ENCODE measurements at regions of chr12 and their contacts with region 1.

Region 1: DNA sequence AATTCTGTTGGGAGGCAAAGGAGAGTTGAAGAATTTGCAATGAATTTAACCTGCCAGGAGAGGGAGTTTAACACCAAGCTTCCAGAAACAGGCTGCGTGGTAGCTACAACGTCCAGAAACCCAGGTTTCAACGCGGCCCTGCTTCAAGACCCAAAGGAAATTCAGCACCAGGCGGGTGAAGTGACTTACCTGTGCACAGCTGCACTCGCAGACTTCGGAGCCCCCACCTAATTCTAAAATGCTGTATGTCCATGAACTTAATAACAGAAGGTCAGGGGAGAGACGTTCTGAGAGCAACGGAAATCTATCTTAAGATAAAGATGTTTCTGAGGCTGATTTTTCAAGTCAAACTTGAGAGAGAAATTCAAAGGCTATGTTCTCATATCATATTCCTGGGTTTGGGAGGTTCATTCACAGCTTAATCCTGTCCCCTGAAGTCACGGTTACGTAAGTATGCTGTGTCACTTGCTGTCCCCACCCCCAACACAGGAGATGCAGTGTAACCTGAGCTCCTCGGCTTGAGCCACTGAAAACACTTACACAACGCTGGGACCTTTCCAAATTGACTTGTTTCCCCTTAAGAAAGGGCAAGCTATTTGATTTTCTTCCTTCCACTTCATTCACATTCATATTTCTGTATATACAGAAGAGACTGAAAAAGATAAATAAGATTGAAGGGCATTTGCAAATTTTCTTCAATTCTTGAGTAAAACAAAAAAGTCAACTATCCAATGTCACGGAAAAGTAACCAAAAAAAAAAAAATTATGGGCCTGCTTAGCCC is 22.7 kb downstream of the CLIP1 start:
- DNase-seq: peak; percentile 78 to 88 (median 86)
- H3K4me3 ChIP-seq: peak overlapping the region in 6 of 7 experiments; percentile 14 to 60 (median 44)
- H3K27ac ChIP-seq: peak overlapping the region; percentile 47 to 86
- H3K4me1 ChIP-seq: peaks cover 7 to 32% (median 25%) of the 10 kb centered on the region in 4 experiments
- H3K27me3 ChIP-seq: no peaks in the 10 kb centered on the region

Region 2: GRCh38 chr12:122413516-122414404 is 14.0 kb after region 1 on chr12:
- CTCF ChIA-PET with region 1: interaction called, 33 read pairs
- POLR2A ChIA-PET with region 1: no interaction called
- DNase-seq: peak in 2 of 3 donors; percentile 15 to 18
- H3K4me3 ChIP-seq: no peak overlapping the region
- H3K27ac ChIP-seq: no peak overlapping the region
- H3K4me1 ChIP-seq: peaks cover 0 to 12% (median 8%) of the 10 kb centered on the region in 4 experiments
- H3K27me3 ChIP-seq: no peaks in the 10 kb centered on the region

Region 3: DNA sequence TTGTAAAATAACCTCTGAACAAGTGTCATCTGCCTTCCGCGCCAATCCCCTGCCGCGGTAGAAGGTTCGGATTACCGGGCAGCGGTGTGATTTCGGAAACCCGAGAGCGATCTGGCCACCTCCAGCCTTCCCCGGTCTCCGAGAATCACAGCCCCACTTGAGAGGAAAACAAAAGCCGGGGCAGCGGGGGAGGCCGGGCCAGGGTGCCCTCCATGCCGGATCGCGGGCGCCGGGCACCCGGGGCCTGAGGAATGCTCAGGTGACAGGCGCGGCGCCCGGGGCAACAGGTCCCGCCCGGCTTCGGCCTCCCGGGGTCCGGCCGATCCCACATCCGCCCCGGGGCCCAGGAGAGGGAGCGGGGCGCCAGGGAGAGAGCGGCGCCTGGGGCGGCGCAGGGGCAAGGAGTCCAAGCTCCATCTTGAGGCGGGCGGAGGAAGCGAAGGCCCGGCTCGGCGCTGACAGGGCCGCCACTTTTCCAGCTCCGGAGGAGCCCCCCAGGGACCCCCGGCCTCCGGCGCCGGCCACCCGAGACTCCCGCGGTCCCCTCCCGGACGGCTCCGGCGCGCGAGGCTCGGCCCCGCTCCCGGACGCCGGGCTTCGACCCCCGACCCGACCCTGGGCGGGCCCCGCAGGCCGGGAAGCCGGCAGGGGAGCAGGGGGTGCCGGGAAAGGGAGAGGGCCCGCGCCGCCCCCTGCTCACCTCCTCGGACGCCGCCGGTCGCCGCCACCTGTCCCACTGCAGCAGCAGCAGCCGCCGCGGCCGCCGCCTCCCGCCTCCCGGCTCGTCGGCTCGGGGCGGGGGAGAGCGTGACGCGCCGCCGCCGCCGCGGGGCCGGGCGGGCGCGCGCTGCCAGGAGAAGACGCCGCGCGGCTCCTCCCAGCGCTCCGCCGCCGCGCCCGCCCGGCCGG is 22.3 kb after region 1 on chr12 and contains the start of gene CLIP1:
- CTCF ChIA-PET with region 1: interaction called, 33 read pairs
- POLR2A ChIA-PET with region 1: interaction called, 3 read pairs
- DNase-seq: peak; percentile 47 to 69 (median 50)
- H3K4me3 ChIP-seq: peak within 1 kb of the TSS; percentile 89 to 99 (median 94)
- H3K27ac ChIP-seq: peak within 1 kb of the TSS; percentile 81 to 92
- H3K4me1 ChIP-seq: peaks cover 8 to 31% (median 25%) of the 10 kb centered on the region in 4 experiments
- H3K27me3 ChIP-seq: no peaks in the 10 kb centered on the region

Region 4: DNA sequence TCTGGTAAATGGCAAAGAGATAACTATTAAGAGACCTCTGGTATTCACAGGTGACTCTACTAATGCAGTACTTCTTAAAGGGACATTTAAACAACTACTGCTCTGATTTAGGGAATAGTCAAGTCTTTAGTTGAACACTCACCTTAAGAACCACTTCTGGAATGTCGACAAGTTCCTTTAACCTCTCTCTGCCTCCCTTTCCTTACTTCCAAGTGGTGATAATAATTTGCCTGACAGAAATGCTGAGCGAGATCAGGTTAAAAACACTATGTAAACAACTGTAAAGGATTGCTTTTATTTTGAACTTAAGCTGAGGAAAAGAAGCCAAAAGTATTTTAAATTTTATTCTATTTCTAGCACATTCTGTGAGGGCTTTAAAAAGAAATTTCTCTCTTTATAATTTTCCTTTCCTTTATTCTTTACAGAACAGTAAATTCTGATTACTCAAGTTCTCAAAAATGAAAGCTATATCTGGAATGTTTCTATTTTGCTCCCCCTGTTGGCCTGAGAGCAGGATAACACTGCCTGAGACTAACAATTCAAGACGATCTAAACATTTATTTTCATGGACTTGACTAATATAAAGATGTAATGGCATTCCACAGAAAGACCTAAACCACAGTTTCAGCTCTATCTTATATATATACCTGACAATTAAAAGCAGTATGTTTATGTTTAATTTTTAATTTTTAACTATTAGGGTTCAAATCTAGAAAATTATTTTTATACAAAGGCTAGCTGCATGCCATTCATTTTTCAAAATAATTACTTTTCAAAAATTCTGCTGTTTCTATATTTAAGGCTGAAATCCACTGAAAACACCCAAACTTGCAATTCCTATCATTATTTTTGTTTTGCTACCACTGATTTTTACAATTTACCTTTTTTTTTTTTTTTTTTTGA is 71.8 kb after region 1 on chr12:
- CTCF ChIA-PET with region 1: interaction called, 158 read pairs
- POLR2A ChIA-PET with region 1: interaction called, 7 read pairs
- DNase-seq: peak; percentile 67 to 82 (median 77)
- H3K4me3 ChIP-seq: no peak overlapping the region
- H3K27ac ChIP-seq: no peak overlapping the region
- H3K4me1 ChIP-seq: no peaks in the 10 kb centered on the region
- H3K27me3 ChIP-seq: no peaks in the 10 kb centered on the region

Measured in common myeloid progenitor, CD34-positive (primary cell).